ENCODE measurements at regions of chr10 and their contacts with region 1.

Region 1: DNA sequence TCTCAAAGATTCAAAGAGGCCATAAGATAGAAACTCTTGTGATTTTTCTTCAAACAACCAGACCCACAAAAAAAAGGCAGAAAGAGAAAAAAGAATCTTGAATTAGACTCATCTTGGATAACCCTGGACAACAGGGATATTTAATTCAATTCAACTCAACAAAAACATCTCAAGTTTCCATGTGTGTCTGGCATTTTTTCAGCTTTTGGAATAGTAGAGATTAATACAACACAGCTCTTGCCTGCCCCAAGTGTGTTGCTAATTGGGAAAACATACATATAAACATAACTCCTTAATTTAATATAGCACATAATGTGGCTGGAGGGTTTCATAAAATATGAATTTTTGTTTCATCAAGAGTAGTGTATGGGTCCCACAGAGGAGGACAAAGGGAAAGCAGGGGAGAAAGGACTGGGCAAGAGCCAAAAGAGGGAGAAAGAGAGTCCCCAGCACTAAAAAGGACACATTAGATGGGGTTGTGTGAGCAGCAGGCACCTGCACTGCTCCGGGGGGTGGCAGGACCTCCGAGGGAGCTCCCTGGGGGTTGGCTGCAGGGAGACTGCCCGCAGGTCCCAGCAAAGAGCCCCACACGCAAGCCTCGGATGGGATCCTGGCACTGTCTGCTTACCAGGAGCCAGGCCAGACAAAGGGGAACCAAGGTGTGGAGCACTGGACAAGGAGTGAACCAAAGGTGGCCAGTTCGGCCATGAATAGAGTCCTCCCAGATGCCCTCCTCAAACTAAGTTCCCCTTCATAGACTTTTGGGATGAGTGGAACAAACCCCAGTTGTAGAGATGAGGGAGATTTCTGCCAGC is 65.6 kb upstream of the TMEM72 start:
- DNase-seq: no peak
- ATAC-seq: no peak
- H3K4me3 ChIP-seq: no peak overlapping the region
- H3K27ac ChIP-seq: no peak overlapping the region
- H3K4me1 ChIP-seq: no peaks in the 10 kb centered on the region
- CTCF ChIP-seq: no peak
- EP300 ChIP-seq: no peak
- POLR2A ChIP-seq: no peak
- RAD21 ChIP-seq: no peak

Region 2: DNA sequence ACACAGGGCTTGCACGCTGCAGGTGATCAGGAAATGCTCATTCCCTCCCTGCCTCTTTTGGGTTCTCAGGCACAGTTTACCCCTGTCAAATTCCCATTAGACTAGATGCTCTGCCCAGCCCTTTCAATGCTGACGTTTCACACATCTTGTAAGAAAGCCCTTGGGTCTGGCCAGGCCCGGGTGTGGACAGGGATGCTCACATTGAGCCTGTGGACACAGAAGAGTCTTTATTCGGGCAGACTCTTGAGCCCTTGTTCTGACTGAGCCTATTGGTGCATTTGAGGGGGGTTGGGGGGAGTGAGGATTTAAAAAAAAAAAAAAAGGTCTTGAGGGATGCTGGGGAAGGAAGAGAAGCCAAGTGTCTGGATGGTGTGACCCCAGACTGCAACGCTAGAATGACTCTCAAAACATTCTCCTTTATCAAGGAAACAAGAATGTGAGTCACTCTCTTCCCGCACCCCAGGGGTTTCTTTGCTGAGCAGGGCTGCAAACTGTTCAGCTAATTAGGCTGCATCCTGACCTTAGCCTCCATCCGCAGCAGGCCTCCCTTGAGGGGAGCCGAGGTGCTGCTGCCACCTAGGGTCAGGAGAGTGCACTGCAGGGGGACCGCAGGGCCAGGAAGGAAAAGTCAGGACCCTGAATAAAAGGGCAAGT is 11.9 kb after region 1 on chr10:
- CTCF ChIA-PET with region 1: interaction called, 22 read pairs
- POLR2A ChIA-PET with region 1: no interaction called
- DNase-seq: peak; percentile 41 to 55
- ATAC-seq: peak; percentile 44 to 83; a peak in 3 of 6 replicates
- H3K4me3 ChIP-seq: no peak overlapping the region
- H3K27ac ChIP-seq: no peak overlapping the region
- H3K4me1 ChIP-seq: no peaks in the 10 kb centered on the region
- CTCF ChIP-seq: peak; percentile 67
- EP300 ChIP-seq: no peak
- POLR2A ChIP-seq: no peak
- RAD21 ChIP-seq: peak; percentile 63 to 74